ENCODE measurements at regions of chr4 and their contacts with region 1.

Region 1: GRCh38 chr4:7186061-7186461 is 6.3 kb upstream of the SORCS2 start:
- DNase-seq: no peak
- H3K4me3 ChIP-seq: no peak overlapping the region
- H3K27ac ChIP-seq: no peak overlapping the region
- H3K4me1 ChIP-seq: no peaks in the 10 kb centered on the region
- H3K27me3 ChIP-seq: no peaks in the 10 kb centered on the region
- CTCF ChIP-seq: no peak

Region 2: GRCh38 chr4:7151668-7152227 is 34.3 kb before region 1 on chr4:
- intact Hi-C with region 1: loop called (anchors 5 kb)
- DNase-seq: no peak
- H3K4me3 ChIP-seq: no peak overlapping the region
- H3K27ac ChIP-seq: no peak overlapping the region
- H3K4me1 ChIP-seq: no peaks in the 10 kb centered on the region
- H3K27me3 ChIP-seq: no peaks in the 10 kb centered on the region
- CTCF ChIP-seq: peak; percentile 18